Colonic mucosa (tissue), 4 donors: ENCODE measurements at regions of chr17 and their contacts with region 1.

Region 1: DNA sequence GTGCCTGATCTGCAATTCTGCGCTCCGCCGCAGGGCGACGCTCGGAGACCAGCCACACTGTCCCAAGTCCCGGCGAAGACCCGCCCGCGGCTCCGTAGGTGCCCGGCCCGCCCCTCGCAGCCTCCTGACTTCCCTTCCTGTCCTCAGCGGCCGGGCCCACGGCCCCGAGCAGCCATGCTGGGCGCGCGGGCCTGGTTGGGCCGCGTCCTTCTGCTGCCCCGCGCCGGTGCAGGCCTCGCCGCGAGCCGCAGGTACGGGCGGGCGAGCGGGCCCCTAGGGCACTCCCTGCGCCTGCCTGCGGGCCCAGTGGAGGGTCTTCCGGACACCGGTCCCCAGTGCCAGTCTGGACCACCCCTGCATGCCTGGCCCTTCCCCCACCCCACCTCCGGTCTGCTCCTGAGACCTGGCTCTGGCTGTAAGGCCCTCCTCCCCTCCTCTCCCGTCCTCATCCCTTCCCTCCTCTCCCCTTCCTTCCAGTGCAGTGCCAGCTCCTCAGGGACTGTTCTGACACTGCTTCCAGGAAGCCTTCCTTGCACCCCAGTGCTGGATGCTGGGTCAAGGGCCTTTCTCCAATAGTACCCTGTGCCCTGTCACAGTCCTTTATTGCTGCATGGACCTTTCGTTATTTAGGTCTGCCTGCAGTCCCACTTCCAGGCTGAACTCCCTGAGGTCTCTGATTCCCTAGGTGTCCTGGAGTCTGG is at the start of gene SPATA20:
- DNase-seq: peak; percentile 94
- H3K4me3 ChIP-seq: peak within 1 kb of the TSS; percentile 77
- H3K27ac ChIP-seq: peak within 1 kb of the TSS; percentile 81
- H3K4me1 ChIP-seq: no peaks in the 10 kb centered on the region
- H3K27me3 ChIP-seq: no peaks in the 10 kb centered on the region
- CTCF ChIP-seq: peak; percentile 97
- total RNA-seq, gene SPATA20: 41.6 to 53.1 TPM

Region 2: DNA sequence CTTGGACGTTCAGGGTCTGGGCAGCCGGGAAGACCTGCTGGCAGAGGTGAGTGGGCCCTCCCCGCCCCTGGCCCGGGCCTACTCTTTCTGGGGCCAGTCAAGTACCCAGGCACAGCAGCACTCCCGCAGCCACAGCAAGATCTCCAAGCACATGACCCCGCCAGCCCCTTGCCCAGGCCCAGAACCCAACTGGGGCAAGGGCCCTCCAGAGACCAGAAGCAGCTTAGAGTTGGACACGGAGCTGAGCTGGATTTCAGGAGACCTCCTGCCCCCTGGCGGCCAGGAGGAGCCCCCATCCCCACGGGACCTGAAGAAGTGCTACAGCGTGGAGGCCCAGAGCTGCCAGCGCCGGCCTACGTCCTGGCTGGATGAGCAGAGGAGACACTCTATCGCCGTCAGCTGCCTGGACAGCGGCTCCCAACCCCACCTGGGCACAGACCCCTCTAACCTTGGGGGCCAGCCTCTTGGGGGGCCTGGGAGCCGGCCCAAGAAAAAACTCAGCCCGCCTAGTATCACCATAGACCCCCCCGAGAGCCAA is 78.9 kb after region 1 on chr17:
- intact Hi-C with region 1: loop called (anchors 5 kb)
- DNase-seq: peak; percentile 58
- H3K4me3 ChIP-seq: no peak overlapping the region
- H3K27ac ChIP-seq: no peak overlapping the region
- H3K4me1 ChIP-seq: peaks cover 19% of the 10 kb centered on the region
- H3K27me3 ChIP-seq: no peaks in the 10 kb centered on the region
- CTCF ChIP-seq: peak; percentile 64

Region 3: GRCh38 chr17:50697663-50698274 is 150.6 kb after region 1 on chr17:
- intact Hi-C with region 1: loop called (anchors 2 kb)
- DNase-seq: no peak
- H3K4me3 ChIP-seq: no peak overlapping the region
- H3K27ac ChIP-seq: no peak overlapping the region
- H3K4me1 ChIP-seq: no peaks in the 10 kb centered on the region
- H3K27me3 ChIP-seq: no peaks in the 10 kb centered on the region
- CTCF ChIP-seq: no peak

Region 4: GRCh38 chr17:50841949-50842354 is 294.8 kb after region 1 on chr17:
- intact Hi-C with region 1: loop called (anchors 5 kb)
- DNase-seq: peak; percentile 83
- H3K4me3 ChIP-seq: no peak overlapping the region
- H3K27ac ChIP-seq: no peak overlapping the region
- H3K4me1 ChIP-seq: no peaks in the 10 kb centered on the region
- H3K27me3 ChIP-seq: no peaks in the 10 kb centered on the region
- CTCF ChIP-seq: peak; percentile 70

Region 5: GRCh38 chr17:50949989-50950881 is 403.1 kb after region 1 on chr17:
- intact Hi-C with region 1: loop called (anchors 10 kb)
- DNase-seq: peak; percentile 86
- H3K4me3 ChIP-seq: no peak overlapping the region
- H3K27ac ChIP-seq: peak overlapping the region; percentile 84
- H3K4me1 ChIP-seq: peaks cover 26% of the 10 kb centered on the region
- H3K27me3 ChIP-seq: no peaks in the 10 kb centered on the region
- CTCF ChIP-seq: peak; percentile 76